ENCODE measurements at regions of chr19 and their contacts with region 1.

Region 1: GRCh38 chr19:47243776-47244547 is 12.4 kb upstream of the CCDC9 start:
- DNase-seq: peak; percentile 97
- ATAC-seq: peak; percentile 68
- H3K4me3 ChIP-seq: peak overlapping the region; percentile 37
- H3K27ac ChIP-seq: peak overlapping the region; percentile 82
- H3K4me1 ChIP-seq: peaks cover 27% of the 10 kb centered on the region
- H3K27me3 ChIP-seq: no peaks in the 10 kb centered on the region
- CTCF ChIP-seq: peak; percentile 99
- POLR2A ChIP-seq: peak; percentile 69
- RAD21 ChIP-seq: peak; percentile 96

Region 2: DNA sequence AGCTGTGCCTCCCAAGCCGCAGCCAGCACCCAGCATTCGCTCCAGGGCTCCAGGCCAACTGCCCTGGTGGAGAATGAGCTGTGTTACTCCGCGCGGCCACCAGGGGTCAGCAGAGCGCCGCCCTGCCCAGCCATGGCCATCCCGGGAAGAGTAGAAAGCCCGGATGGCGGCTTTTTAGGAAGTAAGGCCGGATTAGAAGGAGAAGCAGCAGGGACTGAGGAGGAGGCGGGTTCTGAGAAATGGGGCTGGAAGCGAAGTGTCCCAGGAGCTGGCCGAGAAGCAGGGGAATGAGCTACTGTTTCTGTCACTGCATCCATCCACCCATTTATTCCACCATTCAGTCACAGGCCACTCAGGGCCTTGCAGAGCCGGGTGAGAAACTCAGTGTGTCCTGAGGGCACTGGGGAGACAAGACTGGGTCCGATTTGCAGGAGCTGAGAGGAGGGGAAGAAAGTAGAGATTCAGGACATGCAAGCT is 230.9 kb before region 1 on chr19:
- CTCF ChIA-PET with region 1: interaction called, 3 read pairs
- POLR2A ChIA-PET with region 1: no interaction called
- dilution Hi-C with region 1: no loop called
- in situ Hi-C with region 1: no loop called
- intact Hi-C with region 1: loop called (anchors 2 kb)
- DNase-seq: peak; percentile 51
- ATAC-seq: peak; percentile 99
- H3K4me3 ChIP-seq: no peak overlapping the region
- H3K27ac ChIP-seq: no peak overlapping the region
- H3K4me1 ChIP-seq: no peaks in the 10 kb centered on the region
- H3K27me3 ChIP-seq: no peaks in the 10 kb centered on the region
- CTCF ChIP-seq: peak; percentile 98
- POLR2A ChIP-seq: no peak
- RAD21 ChIP-seq: peak; percentile 91

Region 3: DNA sequence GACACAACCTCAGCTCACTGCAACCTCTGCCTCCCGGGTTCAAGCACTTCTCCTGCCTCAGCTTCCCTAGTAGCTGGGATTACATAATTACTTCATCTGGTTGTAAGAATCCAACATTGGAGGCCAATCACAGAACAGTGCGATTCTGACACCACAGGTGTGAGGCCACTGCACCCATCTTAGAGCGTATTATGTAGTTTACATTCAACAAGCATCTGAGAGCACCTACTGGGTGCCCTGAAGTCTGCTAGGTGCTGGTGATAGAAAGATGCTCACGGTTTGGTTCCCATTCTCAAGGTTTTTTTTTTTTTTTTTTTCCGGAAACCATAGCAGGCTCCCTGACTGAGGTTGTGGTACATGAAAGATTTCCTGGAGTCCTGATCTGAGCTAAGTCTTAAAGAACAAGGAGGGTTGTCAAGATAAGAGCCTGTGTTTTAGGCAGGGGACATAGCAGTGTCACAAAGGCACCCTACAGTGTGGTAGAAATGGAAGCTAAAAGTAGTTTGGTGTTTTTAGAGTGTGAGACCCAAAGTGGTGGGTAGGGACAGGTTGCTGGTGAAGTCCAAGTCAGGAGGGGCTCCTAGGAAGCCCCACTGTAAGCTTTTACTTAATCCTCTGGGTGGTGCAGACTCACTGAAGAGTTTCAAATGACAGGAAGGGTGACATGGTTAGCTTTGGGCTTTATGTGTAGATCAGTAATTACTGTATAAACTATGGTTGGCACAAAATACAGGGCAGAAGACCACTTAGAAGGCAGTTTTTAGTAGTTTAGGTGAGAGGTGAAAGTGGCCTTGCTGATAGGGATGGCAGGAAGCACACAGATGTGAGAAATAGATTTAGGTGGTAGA is 98.1 kb before region 1 on chr19:
- CTCF ChIA-PET with region 1: interaction called, 16 read pairs
- POLR2A ChIA-PET with region 1: interaction called, 8 read pairs
- dilution Hi-C with region 1: no loop called
- in situ Hi-C with region 1: loop called (anchors 5 kb)
- intact Hi-C with region 1: loop called (anchors 1 kb)
- DNase-seq: no peak
- ATAC-seq: no peak
- H3K4me3 ChIP-seq: no peak overlapping the region
- H3K27ac ChIP-seq: no peak overlapping the region
- H3K4me1 ChIP-seq: peaks cover 12% of the 10 kb centered on the region
- H3K27me3 ChIP-seq: no peaks in the 10 kb centered on the region
- CTCF ChIP-seq: no peak
- POLR2A ChIP-seq: no peak
- RAD21 ChIP-seq: no peak

Region 4: DNA sequence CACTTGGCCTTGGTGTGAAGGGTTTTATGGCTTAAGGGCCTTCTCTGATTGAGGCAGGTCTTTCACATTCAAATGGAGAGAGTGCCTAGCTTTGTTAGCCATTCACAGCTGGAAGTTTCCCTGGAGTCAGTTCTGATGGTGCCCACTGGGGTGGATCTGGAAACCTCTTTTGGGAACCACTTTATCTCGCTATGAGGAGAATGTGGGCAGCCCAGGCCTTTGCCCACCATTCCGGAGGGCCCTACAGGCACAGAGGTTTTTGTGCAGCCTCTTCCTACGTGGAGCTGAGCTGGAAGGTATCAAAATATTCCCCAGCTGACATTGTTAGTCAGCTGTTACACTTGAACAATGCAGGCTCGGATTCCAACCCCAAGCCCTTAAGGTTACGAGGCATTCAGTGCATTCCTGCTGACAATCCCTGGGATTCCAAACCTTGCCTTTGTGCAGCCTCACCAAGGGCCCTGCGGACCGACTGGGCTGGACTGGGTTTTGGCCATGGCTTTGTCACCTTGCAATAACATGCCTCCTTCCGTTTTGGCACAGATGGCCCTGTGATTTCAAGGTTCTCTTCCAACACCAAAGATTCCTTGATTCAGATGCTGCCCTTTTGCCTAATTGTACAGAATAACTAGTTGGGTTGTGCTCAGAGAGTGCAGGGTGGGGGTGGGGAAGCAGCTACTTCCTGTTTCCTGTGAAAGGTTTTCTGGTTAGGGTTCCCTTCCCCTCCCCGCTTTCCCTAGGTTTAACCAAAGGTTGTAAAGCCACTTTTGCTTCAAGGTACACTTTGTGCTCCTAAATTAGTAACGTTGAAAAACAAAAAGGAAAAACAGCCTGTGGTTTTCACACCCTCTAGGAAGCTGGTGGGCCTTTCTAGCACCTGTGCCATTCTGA is 86.3 kb before region 1 on chr19:
- CTCF ChIA-PET with region 1: interaction called, 15 read pairs
- POLR2A ChIA-PET with region 1: no interaction called
- dilution Hi-C with region 1: no loop called
- in situ Hi-C with region 1: no loop called
- intact Hi-C with region 1: no loop called
- DNase-seq: peak; percentile 72
- ATAC-seq: peak; percentile 69
- H3K4me3 ChIP-seq: no peak overlapping the region
- H3K27ac ChIP-seq: peak overlapping the region; percentile 78
- H3K4me1 ChIP-seq: peaks cover 27% of the 10 kb centered on the region
- H3K27me3 ChIP-seq: no peaks in the 10 kb centered on the region
- CTCF ChIP-seq: no peak
- POLR2A ChIP-seq: no peak
- RAD21 ChIP-seq: no peak

Region 5: DNA sequence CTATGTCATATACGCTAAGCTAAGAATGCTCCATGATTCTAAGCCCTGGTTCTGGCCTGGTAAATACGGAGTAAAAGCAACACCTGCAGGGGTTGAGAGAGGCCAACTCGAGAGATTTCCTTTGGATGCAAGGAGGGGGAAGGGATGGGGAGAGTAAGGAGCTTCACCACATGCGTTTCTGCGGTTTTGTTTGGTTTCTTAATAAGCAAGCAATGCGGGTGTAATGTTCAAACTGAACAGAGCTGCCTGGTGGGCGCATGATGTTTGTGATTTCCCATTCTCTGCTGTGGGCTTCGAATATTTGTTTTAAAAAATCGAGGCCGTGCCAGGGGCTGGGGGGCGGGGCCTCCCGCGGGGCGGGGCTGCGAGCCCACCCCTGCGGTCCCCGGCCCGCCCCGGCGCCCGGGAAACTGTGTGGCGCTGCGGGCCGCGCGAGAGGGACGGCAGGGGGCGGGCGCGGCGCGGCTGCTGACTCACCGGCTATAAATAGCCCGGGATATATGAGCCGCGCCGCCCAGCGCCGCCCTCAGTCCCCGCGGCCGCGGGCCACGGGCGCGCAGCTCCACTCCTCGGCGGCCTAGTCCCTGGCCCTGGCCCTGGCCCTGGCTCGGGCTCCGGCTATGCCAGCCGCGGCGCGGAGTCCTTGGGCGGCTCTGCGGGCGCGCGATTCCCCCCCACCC is 18.1 kb before region 1 on chr19:
- CTCF ChIA-PET with region 1: interaction called, 12 read pairs
- POLR2A ChIA-PET with region 1: interaction called, 4 read pairs
- dilution Hi-C with region 1: no loop called
- in situ Hi-C with region 1: no loop called
- intact Hi-C with region 1: loop called (anchors 1 kb)
- DNase-seq: peak; percentile 84
- ATAC-seq: peak; percentile 57
- H3K4me3 ChIP-seq: peak overlapping the region; percentile 1
- H3K27ac ChIP-seq: peak overlapping the region; percentile 97
- H3K4me1 ChIP-seq: peaks cover 19% of the 10 kb centered on the region
- H3K27me3 ChIP-seq: no peaks in the 10 kb centered on the region
- CTCF ChIP-seq: peak; percentile 39
- POLR2A ChIP-seq: peak; percentile 99
- RAD21 ChIP-seq: no peak

Region 6: DNA sequence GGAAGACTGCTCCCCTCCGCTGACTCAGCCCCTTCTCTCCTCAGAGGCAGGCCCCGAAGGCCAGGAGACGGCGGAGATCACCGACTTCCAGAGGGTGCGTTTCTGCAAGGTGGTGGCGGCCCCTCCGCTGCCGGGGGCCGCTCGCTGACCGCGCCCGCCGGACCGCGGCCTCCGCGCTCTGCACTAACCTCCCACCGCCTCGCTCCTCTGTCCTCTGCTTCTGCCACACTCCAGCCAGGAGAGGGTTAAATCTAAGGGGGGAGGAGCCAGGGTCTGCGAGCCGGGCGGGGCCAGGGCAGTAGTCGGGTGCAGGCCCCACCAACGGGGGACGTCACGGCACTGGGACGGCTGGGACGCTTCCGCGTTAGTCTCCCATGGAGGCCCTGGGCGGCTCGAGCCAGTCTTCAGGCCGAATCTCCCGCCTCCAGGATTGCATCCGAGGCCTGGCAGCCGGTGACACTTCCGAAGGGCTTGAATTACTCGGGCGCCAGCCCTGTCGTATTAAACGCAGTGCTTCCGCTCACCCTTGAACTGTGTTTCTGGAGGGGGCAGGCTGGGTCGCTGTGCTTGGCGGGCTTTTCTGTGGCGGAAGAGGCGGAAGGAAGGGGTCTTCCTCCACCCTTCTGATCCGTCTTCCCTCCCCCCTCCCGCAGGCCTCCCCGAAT is 29.5 kb after region 1 on chr19:
- CTCF ChIA-PET with region 1: interaction called, 3 read pairs
- POLR2A ChIA-PET with region 1: no interaction called
- dilution Hi-C with region 1: no loop called
- in situ Hi-C with region 1: no loop called
- intact Hi-C with region 1: loop called (anchors 1 kb)
- DNase-seq: peak; percentile 90
- ATAC-seq: peak; percentile 74
- H3K4me3 ChIP-seq: peak overlapping the region; percentile 58
- H3K27ac ChIP-seq: peak overlapping the region; percentile 94
- H3K4me1 ChIP-seq: peaks cover 14% of the 10 kb centered on the region
- H3K27me3 ChIP-seq: no peaks in the 10 kb centered on the region
- CTCF ChIP-seq: 0 out of 2 replicates have a peak, but pooled peaks have one; percentile 16
- POLR2A ChIP-seq: peak; percentile 84
- RAD21 ChIP-seq: no peak

Region 7: GRCh38 chr19:47322058-47322457 is 78.1 kb after region 1 on chr19:
- CTCF ChIA-PET with region 1: no interaction called
- POLR2A ChIA-PET with region 1: no interaction called
- dilution Hi-C with region 1: no loop called
- in situ Hi-C with region 1: no loop called
- intact Hi-C with region 1: no loop called
- DNase-seq: no peak
- ATAC-seq: no peak
- H3K4me3 ChIP-seq: no peak overlapping the region
- H3K27ac ChIP-seq: no peak overlapping the region
- H3K4me1 ChIP-seq: no peaks in the 10 kb centered on the region
- H3K27me3 ChIP-seq: peaks cover 8% of the 10 kb centered on the region
- CTCF ChIP-seq: no peak
- POLR2A ChIP-seq: no peak
- RAD21 ChIP-seq: no peak